Right cardiac atrium (tissue), 5 donors: ENCODE measurements at regions of chr2 and their contacts with region 1.

Region 1: GRCh38 chr2:217713395-217714286 is 289.2 kb downstream of the TNS1 start:
- DNase-seq: peak; percentile 74 to 90 (median 90)
- ATAC-seq: peak; percentile 76 to 80
- H3K4me3 ChIP-seq: no peak overlapping the region
- H3K27ac ChIP-seq: peak overlapping the region; percentile 2
- H3K4me1 ChIP-seq: peaks cover 7% of the 10 kb centered on the region
- H3K27me3 ChIP-seq: no peaks in the 10 kb centered on the region

Region 2: GRCh38 chr2:216687646-216688045 is 1026.0 kb before region 1 on chr2:
- intact Hi-C with region 1: loop called in 3 of 4 experiments (anchors 5 to 10 kb)
- DNase-seq: no peak
- ATAC-seq: no peak
- H3K4me3 ChIP-seq: no peak overlapping the region
- H3K27ac ChIP-seq: no peak overlapping the region
- H3K4me1 ChIP-seq: peaks cover 14% of the 10 kb centered on the region
- H3K27me3 ChIP-seq: no peaks in the 10 kb centered on the region

Region 3: GRCh38 chr2:216989340-216990129 is 724.1 kb before region 1 on chr2:
- intact Hi-C with region 1: loop called in 1 of 4 experiments (anchors 10 kb)
- DNase-seq: no peak
- ATAC-seq: peak in 1 of 2 donors; percentile 21
- H3K4me3 ChIP-seq: no peak overlapping the region
- H3K27ac ChIP-seq: no peak overlapping the region
- H3K4me1 ChIP-seq: peaks cover 6% of the 10 kb centered on the region
- H3K27me3 ChIP-seq: no peaks in the 10 kb centered on the region

Region 4: DNA sequence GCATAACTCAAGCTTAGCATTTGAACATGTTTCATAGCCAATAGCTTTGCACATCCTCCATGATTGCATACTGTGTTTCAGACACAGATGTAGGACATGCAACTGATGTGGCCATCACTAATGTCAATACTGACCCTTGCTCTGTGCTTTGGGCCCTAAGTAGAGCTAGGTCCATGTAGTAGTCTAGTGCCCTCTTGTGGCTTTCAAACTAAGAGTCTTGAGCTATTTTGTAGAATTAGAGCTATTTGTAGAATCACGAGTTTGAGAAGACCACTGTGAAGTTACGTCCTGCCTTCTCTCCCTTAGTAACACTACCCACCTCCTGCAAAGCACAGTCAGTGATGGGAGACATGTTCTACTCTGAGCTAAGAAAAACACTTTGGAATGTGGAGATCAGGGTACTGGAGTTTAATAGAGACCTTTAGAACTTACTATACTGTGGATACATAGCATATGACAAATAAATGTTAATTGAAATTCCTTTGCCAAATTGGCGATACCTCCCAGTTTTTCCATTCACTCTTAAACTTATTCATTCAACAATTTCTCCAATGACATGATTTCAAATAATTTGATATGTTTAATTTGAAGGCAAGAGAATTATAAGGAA is 547.3 kb before region 1 on chr2:
- intact Hi-C with region 1: loop called in 1 of 4 experiments (anchors 5 kb)
- DNase-seq: no peak
- ATAC-seq: peak; percentile 72 to 79
- H3K4me3 ChIP-seq: no peak overlapping the region
- H3K27ac ChIP-seq: no peak overlapping the region
- H3K4me1 ChIP-seq: peaks cover 1% of the 10 kb centered on the region
- H3K27me3 ChIP-seq: no peaks in the 10 kb centered on the region

Region 5: DNA sequence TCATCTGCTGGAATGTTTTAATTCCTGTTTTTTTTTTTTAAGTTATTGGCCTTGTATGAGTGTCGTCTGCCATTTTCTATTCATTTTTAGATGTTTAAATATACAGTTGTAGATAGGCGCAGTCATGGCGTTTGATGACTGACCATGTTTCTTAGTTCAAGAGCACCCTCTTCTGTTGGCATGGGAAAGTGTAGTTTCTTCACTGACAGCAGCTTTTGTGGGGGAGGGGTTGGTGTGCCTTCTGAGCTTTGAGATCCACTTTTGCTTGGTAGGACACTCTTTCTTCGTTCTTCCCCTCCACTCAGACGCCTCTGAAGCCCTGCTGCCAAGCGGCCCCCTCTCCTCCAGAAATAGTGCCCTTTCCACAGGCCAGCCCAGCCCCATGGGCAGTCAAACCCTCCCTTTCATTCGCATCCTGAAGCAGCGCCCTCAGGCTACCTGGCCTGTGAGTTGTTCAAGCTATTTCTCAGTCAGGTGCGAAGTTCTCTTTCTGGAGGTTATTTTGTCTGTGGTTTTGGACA is 202.8 kb before region 1 on chr2:
- intact Hi-C with region 1: loop called in 2 of 4 experiments (anchors 10 kb)
- DNase-seq: peak; percentile 47 to 70 (median 62)
- ATAC-seq: peak; percentile 85 to 92
- H3K4me3 ChIP-seq: no peak overlapping the region
- H3K27ac ChIP-seq: no peak overlapping the region
- H3K4me1 ChIP-seq: peaks cover 7% of the 10 kb centered on the region
- H3K27me3 ChIP-seq: no peaks in the 10 kb centered on the region

Region 6: DNA sequence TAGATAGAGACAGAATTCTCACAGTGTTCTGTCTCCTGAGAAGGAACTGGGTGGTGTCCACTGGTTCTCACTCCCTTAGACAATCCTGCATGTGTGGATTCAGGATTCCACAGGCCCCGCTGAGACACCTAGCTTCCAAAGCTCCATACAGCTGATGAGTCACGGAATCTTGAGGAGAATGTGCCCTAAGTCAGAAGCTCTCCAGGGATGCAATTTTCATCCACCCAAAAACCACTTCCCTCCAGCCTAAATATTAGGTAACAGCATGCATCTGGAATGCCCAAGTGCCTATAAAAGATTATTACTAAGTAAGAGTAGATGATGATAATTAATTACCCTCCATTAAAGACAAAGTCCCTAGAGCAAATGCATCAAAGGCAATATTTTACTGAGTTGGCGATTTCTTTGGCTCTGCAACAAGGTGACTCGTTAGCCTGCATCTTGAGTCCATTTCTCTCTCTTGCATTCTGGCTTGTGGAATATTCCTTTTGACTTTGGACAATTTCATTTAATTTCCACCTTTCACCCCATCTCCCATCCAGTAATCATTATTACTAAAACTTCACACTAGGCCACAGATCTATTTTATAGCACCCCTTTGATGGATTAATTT is 185.9 kb before region 1 on chr2:
- intact Hi-C with region 1: loop called in 1 of 4 experiments (anchors 5 kb)
- DNase-seq: no peak
- ATAC-seq: no peak
- H3K4me3 ChIP-seq: no peak overlapping the region
- H3K27ac ChIP-seq: no peak overlapping the region
- H3K4me1 ChIP-seq: peaks cover 2% of the 10 kb centered on the region
- H3K27me3 ChIP-seq: no peaks in the 10 kb centered on the region

Region 7: GRCh38 chr2:218671654-218672566 is 958.3 kb after region 1 on chr2 and contains the starts of genes RNF25 and STK36:
- intact Hi-C with region 1: no loop called
- DNase-seq: peak; percentile 88 to 93 (median 92)
- ATAC-seq: peak; percentile 97
- H3K4me3 ChIP-seq: peak within 1 kb of the TSS; percentile 79
- H3K27ac ChIP-seq: peak within 1 kb of the TSS; percentile 73
- H3K4me1 ChIP-seq: no peaks in the 10 kb centered on the region
- H3K27me3 ChIP-seq: no peaks in the 10 kb centered on the region
- total RNA-seq, gene RNF25: 16.6 to 20.8 (median 17.7) TPM
- total RNA-seq, gene STK36: 8.3 to 11.2 (median 10.0) TPM